Heart left ventricle (tissue), 16 donors: ENCODE measurements at regions of chr7 and their contacts with region 1.

Region 1: DNA sequence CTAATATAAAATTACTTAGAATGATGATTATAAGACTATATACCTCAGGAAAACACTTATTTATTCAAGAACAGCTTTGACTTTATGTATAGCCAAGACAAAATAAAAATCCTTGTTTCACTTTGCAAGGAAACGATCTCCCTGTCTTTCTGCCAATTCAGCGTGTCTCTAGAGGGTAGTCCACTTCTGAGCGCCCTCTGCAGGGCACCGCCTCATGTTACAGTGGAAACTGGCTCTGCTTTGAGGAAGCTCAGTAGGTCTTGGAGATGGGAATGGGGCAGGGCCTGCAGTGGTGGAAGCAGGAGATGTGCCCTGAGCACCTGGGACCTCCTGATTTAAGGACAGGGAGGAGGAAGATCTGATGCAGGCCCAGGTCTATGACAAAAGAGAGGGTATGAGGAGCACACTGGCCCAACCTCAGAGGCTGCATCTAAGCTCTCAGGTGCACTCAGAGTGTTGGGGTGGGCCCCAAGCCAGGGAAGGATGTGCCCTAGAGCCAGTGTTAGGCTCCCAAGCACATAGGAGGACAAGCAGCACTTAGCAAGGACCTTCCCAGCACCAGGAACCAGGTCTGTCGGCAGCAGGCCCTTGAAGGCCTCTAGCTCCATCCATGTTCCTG is 481.0 kb downstream of the TNS3 start:
- DNase-seq: peak in 3 of 5 donors; percentile 36 to 37 (median 36)
- ATAC-seq: peak in 3 of 4 donors; percentile 53 to 59 (median 57)
- H3K4me3 ChIP-seq: no peak overlapping the region
- H3K27ac ChIP-seq: no peak overlapping the region
- H3K4me1 ChIP-seq: peaks cover 0 to 6% (median 0%) of the 10 kb centered on the region in 12 donors
- H3K27me3 ChIP-seq: no peaks in the 10 kb centered on the region
- CTCF ChIP-seq: peak in 11 of 12 donors; percentile 31 to 59 (median 45)
- POLR2A ChIP-seq: no peak

Region 2: GRCh38 chr7:47232751-47233412 is 132.0 kb after region 1 on chr7:
- intact Hi-C with region 1: loop called in 2 of 10 experiments (anchors 5 to 10 kb)
- DNase-seq: no peak
- ATAC-seq: peak in 3 of 4 donors; percentile 27 to 59 (median 36)
- H3K4me3 ChIP-seq: no peak overlapping the region
- H3K27ac ChIP-seq: no peak overlapping the region
- H3K4me1 ChIP-seq: peaks cover 0 to 11% (median 0%) of the 10 kb centered on the region in 12 donors
- H3K27me3 ChIP-seq: no peaks in the 10 kb centered on the region
- CTCF ChIP-seq: peak in 11 of 12 donors; percentile 4 to 49 (median 32)
- POLR2A ChIP-seq: no peak